CD8-positive, alpha-beta memory T cell (primary cell): ENCODE measurements at regions of chr2 and their contacts with region 1.

Region 1: DNA sequence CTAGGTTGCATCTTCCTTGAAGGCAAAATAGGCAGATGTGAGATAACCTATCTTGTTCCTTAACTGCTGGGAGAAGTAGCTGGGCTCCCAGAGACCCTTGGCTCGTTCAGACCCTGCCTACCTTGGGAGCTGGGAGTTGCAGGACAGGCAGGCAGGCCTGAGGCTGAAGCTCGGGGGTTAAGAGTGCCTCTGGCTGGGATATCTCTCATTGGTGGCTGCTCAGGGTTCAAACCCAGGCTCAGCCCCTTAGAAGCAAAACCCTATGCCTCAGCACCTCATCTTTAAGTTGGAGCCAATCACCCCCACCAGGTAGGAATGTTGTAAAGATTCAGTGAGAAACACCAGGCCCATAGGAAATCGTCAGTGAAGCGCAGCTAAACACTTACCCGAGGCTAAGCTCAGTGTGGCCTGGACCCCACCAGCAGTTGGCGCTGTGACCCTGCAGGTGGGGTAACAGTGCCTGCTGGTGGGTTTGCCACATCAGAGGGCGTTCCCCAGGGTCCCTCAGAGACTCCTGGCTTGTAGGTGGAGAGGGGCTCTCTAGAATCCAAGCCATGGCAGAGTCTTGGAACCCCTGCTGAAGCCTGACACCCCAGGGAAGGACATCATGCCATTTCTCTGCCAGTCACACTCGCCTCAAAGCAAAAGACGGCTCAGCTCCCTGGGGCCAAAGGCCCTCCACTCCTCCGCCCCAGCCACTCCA is 54.6 kb upstream of the GPR17 start:
- DNase-seq: peak; percentile 10 to 62 (median 23)
- H3K4me3 ChIP-seq: no peak overlapping the region
- H3K4me3 Mint-ChIP-seq: no peak overlapping the region
- H3K27ac ChIP-seq: no peak overlapping the region
- H3K27ac Mint-ChIP-seq: no peak overlapping the region
- H3K4me1 ChIP-seq: no peaks in the 10 kb centered on the region
- H3K4me1 Mint-ChIP-seq: peaks cover 0 to 2% (median 0%) of the 10 kb centered on the region in 3 donors
- H3K27me3 ChIP-seq: no peaks in the 10 kb centered on the region
- H3K27me3 Mint-ChIP-seq: no peaks in the 10 kb centered on the region

Region 2: GRCh38 chr2:127649684-127650040 is 58.3 kb after region 1 on chr2:
- CTCF ChIA-PET with region 1: interaction called, 27 read pairs
- POLR2A ChIA-PET with region 1: no interaction called
- DNase-seq: peak; percentile 62 to 85 (median 69)
- H3K4me3 ChIP-seq: no peak overlapping the region
- H3K4me3 Mint-ChIP-seq: peak overlapping the region in 4 of 7 donors; percentile 62 to 75 (median 70)
- H3K27ac ChIP-seq: no peak overlapping the region
- H3K27ac Mint-ChIP-seq: peak overlapping the region in 3 of 8 donors; percentile 38 to 78 (median 45)
- H3K4me1 ChIP-seq: peaks cover 10% of the 10 kb centered on the region
- H3K4me1 Mint-ChIP-seq: peaks cover 4 to 17% (median 7%) of the 10 kb centered on the region in 3 donors
- H3K27me3 ChIP-seq: no peaks in the 10 kb centered on the region
- H3K27me3 Mint-ChIP-seq: peaks cover 3 to 4% of the 10 kb centered on the region in 2 donors